Right cardiac atrium (tissue), 5 donors: ENCODE measurements at regions of chr7 and their contacts with region 1.

Region 1: GRCh38 chr7:80918909-80919662 is at the start of gene SEMA3C:
- DNase-seq: peak; percentile 92 to 97 (median 96)
- ATAC-seq: peak; percentile 99 to 100
- H3K4me3 ChIP-seq: peak within 1 kb of the TSS; percentile 94
- H3K27ac ChIP-seq: peak within 1 kb of the TSS; percentile 66
- H3K4me1 ChIP-seq: no peaks in the 10 kb centered on the region
- H3K27me3 ChIP-seq: no peaks in the 10 kb centered on the region
- total RNA-seq, gene SEMA3C: 32.9 to 42.3 (median 41.0) TPM

Region 2: GRCh38 chr7:81256991-81257390 is 337.9 kb after region 1 on chr7:
- intact Hi-C with region 1: loop called in 1 of 4 experiments (anchors 10 kb)
- DNase-seq: peak in 2 of 3 donors; percentile 37 to 64
- ATAC-seq: peak; percentile 53 to 75
- H3K4me3 ChIP-seq: no peak overlapping the region
- H3K27ac ChIP-seq: no peak overlapping the region
- H3K4me1 ChIP-seq: no peaks in the 10 kb centered on the region
- H3K27me3 ChIP-seq: no peaks in the 10 kb centered on the region

Region 3: GRCh38 chr7:81469869-81470723 is 551.0 kb after region 1 on chr7:
- intact Hi-C with region 1: loop called in 1 of 4 experiments (anchors 10 kb)
- DNase-seq: peak; percentile 73 to 83 (median 74)
- ATAC-seq: peak; percentile 84 to 87
- H3K4me3 ChIP-seq: no peak overlapping the region
- H3K27ac ChIP-seq: no peak overlapping the region
- H3K4me1 ChIP-seq: no peaks in the 10 kb centered on the region
- H3K27me3 ChIP-seq: no peaks in the 10 kb centered on the region